ENCODE measurements at regions of chr13 and their contacts with region 1.

Region 1: DNA sequence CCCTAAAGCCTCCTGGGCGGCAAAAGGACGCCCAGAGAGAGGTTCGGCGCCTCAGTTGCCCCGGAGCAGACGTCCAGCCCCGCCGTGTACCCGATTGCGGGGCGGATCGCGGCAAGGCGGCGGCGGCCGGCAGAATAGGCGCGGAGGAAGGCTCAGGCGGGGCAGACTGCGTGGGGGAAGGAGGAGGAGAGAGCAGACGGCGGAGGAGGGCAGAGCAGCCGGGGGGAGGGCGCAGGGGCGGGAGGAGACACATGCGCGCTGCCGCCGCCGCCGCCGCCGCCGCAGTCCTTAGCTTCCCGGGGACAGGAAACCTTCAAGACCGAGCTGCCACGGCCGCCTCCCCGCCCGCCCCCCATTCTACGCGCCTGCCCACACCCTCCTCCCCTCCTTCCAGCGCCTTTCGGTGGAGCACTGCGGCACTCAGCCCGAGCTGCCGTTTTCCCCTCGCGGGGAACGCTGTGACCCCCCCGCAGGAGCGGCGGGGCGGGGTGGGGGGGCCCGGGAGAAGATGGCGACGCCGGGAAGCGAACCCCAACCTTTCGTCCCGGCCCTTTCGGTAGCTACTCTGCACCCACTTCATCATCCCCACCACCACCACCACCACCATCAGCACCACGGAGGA is at the start of gene LRCH1:
- DNase-seq: peak; percentile 82
- ATAC-seq: peak; percentile 77
- H3K4me3 Mint-ChIP-seq: peak within 1 kb of the TSS; percentile 87
- H3K27ac Mint-ChIP-seq: peak within 1 kb of the TSS; percentile 63; the same call in 1 of the 2 replicates
- H3K4me1 Mint-ChIP-seq: peaks cover 19% of the 10 kb centered on the region
- H3K27me3 Mint-ChIP-seq: peaks cover 13% of the 10 kb centered on the region
- CTCF ChIP-seq: no peak
- total RNA-seq, gene LRCH1: 9.2 to 11.8 TPM (median 9.7 TPM) in 3 replicates

Region 2: DNA sequence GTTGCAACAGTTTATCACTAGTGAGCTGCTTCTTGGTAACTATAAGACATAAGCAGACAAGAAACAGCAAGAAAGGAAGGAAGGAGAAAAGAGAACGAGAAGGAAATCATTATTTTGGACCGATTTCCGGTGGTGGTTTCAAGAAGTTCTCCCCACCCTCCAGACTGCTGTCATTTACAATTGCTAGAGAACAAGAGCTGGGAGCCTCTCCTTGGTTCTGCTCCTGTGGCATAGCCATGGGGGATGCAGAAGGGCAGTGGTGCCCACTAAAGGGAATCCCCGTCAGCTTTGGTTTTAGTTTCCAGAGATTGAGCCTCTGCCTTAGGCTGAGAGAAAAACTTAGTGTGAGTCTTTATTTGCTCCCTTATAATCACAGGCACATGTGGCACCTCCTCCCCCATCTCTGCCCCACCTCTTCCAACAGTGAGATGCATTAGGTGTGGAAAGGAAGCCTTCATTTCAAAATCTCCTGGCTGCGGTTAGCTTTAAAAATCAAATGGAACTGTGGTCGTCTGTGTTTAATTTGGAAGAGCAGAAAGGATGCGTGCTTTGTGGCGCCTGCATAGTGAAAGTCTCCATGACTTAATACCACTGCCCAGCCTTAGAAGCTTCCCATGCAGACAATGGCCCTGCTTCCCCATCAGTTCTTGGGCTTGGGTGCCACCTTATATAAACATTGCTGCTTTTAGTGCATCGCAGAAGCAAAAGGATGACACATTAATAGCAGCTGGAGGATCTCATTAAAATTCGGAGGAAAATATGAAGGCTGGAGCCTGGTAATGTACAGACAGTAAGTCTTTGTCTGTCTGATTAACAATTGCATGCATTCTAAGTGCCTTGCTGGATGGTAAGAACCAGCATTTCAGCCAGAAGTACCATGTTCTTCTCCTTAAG is 24.9 kb after region 1 on chr13:
- CTCF ChIA-PET with region 1: no interaction called
- POLR2A ChIA-PET with region 1: no interaction called
- DNase-seq: no peak
- ATAC-seq: no peak
- H3K4me3 Mint-ChIP-seq: no peak overlapping the region
- H3K27ac Mint-ChIP-seq: no peak overlapping the region
- H3K4me1 Mint-ChIP-seq: peaks cover 23% of the 10 kb centered on the region
- H3K27me3 Mint-ChIP-seq: no peaks in the 10 kb centered on the region
- CTCF ChIP-seq: no peak

Region 3: DNA sequence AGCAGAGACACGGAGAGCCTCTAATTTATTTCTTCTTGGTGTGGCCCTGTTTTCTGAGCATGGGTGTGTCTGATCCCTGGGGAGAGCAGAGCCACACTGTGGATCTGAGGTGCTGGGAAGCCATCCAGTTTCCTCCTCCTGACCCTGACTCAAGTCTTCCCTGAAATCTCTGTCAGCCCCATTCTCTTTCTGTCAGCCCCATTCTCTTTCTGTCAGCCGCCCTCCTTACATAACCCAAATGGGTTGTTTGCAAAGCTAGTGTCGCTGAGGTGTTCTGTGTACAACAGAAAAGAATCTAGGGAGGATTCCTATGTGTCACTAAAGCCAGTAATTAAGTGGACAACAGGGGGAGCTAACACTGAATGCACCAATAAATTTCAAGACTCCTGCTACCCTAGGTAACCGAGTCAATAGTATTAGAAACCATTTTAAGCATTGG is 50.2 kb after region 1 on chr13:
- CTCF ChIA-PET with region 1: interaction called, 14 read pairs
- POLR2A ChIA-PET with region 1: no interaction called
- DNase-seq: no peak
- ATAC-seq: peak; percentile 64
- H3K4me3 Mint-ChIP-seq: no peak overlapping the region
- H3K27ac Mint-ChIP-seq: no peak overlapping the region
- H3K4me1 Mint-ChIP-seq: peaks cover 33% of the 10 kb centered on the region
- H3K27me3 Mint-ChIP-seq: no peaks in the 10 kb centered on the region
- CTCF ChIP-seq: no peak

Region 4: GRCh38 chr13:46721054-46721453 is 168.1 kb after region 1 on chr13:
- CTCF ChIA-PET with region 1: interaction called, 28 read pairs
- POLR2A ChIA-PET with region 1: no interaction called
- DNase-seq: peak; percentile 32
- ATAC-seq: peak; percentile 39
- H3K4me3 Mint-ChIP-seq: no peak overlapping the region
- H3K27ac Mint-ChIP-seq: no peak overlapping the region
- H3K4me1 Mint-ChIP-seq: no peaks in the 10 kb centered on the region
- H3K27me3 Mint-ChIP-seq: no peaks in the 10 kb centered on the region
- CTCF ChIP-seq: peak; percentile 43